ENCODE measurements at regions of chr1 and their contacts with region 1.

Region 1: GRCh38 chr1:115138968-115139367 is 49.7 kb upstream of the TSPAN2 start:
- DNase-seq: peak; percentile 79 to 86
- ATAC-seq: peak; percentile 91 to 92
- H3K4me3 ChIP-seq: no peak overlapping the region
- H3K27ac ChIP-seq: peak overlapping the region in 1 of 4 donors; percentile 42
- H3K4me1 ChIP-seq: peaks cover 9 to 17% of the 10 kb centered on the region in 2 donors
- H3K27me3 ChIP-seq: no peaks in the 10 kb centered on the region
- CTCF ChIP-seq: peak; percentile 85 to 95 (median 90)
- POLR2A ChIP-seq: no peak

Region 2: GRCh38 chr1:115184951-115185331 is 46.0 kb after region 1 on chr1:
- in situ Hi-C with region 1: no loop called
- intact Hi-C with region 1: loop called (anchors 2 kb)
- DNase-seq: peak; percentile 74 to 89
- ATAC-seq: peak; percentile 80 to 85
- H3K4me3 ChIP-seq: peak overlapping the region; percentile 27 to 50 (median 33)
- H3K27ac ChIP-seq: peak overlapping the region; percentile 86 to 96 (median 90)
- H3K4me1 ChIP-seq: peaks cover 32 to 52% of the 10 kb centered on the region in 2 donors
- H3K27me3 ChIP-seq: no peaks in the 10 kb centered on the region
- CTCF ChIP-seq: no peak
- POLR2A ChIP-seq: peak; percentile 53 to 56

Region 3: DNA sequence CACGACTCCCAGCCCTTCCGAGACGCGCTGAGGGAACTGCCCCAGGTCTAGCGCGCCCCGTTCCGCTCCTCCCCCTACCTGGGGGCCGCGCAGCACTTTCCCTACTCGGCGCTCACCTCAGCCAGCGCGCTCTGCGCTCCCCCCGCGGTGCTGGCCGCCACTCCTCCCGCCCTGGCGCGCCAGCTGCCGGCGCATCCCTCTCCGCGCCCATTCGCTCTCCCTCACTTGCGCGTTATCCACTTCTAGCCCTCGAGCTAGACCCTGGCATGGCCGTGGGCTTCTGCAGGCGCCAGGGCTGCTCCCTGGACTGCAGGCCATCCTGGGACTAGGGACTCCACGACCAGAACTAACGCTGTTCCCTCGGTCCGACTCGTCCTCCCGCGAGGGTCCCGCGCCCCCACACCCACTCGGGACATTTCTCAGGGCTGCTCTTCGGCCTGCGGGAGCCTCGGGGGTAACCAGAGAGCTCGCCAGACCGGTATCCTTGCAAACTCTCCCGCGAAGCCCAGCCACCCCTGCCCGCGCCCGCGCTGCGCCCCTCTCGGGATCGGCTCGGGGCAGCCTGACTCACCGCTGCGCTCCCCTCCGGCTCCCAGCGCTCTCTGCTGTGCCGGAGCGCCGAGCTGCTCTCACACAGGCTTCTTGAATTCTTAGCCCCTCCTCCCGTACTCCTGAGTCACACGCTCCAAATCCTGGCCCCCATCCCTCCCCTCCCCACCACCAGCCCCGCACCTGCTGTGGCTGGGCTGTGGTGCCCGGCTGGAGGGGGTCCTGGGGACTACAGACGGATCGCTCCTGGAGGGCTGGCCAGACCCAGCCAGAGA is 198.9 kb after region 1 on chr1 and contains the start of gene NGF:
- in situ Hi-C with region 1: loop called in 2 of 4 experiments (anchors 25 kb)
- intact Hi-C with region 1: loop called (anchors 10 kb)
- DNase-seq: no peak
- ATAC-seq: peak; percentile 28 to 35
- H3K4me3 ChIP-seq: peak within 1 kb of the TSS; percentile 45 to 59 (median 51)
- H3K27ac ChIP-seq: peak within 1 kb of the TSS; percentile 33 to 60 (median 45)
- H3K4me1 ChIP-seq: no peaks in the 10 kb centered on the region
- H3K27me3 ChIP-seq: peaks cover 0 to 13% (median 5%) of the 10 kb centered on the region in 3 donors
- CTCF ChIP-seq: no peak
- POLR2A ChIP-seq: peak in 1 of 2 donors; percentile 11
- total RNA-seq, gene NGF: 0.78 TPM in 1 of 4 donors, not detected in the others

Region 4: DNA sequence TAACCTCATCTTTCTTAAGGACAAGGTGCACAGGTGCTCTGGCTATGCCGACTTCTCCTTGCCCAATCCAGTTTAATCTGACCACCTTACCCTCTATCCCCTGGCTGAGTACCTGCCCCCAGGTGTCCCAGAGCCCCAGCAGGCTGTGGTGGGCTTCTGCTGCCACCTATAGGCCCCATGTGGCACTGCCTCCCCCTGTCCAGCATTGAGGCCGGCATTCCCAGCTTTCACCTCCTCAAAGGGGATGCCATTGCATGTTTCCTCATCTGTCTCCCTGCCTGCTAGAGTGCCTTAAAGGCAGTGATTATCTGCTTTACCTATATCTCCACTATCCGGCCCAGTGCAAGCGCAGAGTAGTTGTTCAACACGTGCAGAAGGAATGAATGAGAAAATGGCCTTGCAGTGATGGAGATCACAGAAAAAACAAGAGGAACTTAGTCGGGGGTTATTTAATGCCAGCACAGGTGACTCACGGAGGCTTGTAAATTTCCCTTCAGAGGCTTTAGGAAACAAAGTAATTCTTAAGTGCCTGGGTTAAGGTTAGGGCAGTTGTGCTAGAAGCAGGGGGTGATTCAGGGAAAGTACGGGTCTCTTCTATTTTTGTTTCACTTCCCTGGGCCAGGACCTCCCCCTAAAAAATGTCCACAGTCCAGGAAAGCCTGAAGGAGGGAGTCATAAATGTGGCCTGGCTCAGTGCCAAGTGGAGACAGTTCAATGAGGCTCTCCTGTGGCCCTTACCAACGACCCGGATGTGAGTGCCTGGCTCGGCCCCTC is 330.9 kb after region 1 on chr1:
- in situ Hi-C with region 1: loop called (anchors 5 kb)
- intact Hi-C with region 1: loop called (anchors 2 kb)
- DNase-seq: peak; percentile 20 to 30
- ATAC-seq: peak; percentile 52 to 83
- H3K4me3 ChIP-seq: no peak overlapping the region
- H3K27ac ChIP-seq: no peak overlapping the region
- H3K4me1 ChIP-seq: no peaks in the 10 kb centered on the region
- H3K27me3 ChIP-seq: no peaks in the 10 kb centered on the region
- CTCF ChIP-seq: peak; percentile 79 to 89 (median 83)
- POLR2A ChIP-seq: no peak

Region 5: GRCh38 chr1:115727706-115728249 is 588.8 kb after region 1 on chr1:
- in situ Hi-C with region 1: no loop called
- intact Hi-C with region 1: loop called (anchors 10 kb)
- DNase-seq: peak; percentile 41 to 61
- ATAC-seq: peak; percentile 64 to 74
- H3K4me3 ChIP-seq: no peak overlapping the region
- H3K27ac ChIP-seq: peak overlapping the region; percentile 15 to 56 (median 42)
- H3K4me1 ChIP-seq: peaks cover 0 to 14% of the 10 kb centered on the region in 2 donors
- H3K27me3 ChIP-seq: no peaks in the 10 kb centered on the region
- CTCF ChIP-seq: no peak
- POLR2A ChIP-seq: no peak

Measured in gastrocnemius medialis (tissue), 4 donors.